ENCODE measurements at regions of chr3 and their contacts with region 1.

Region 1: DNA sequence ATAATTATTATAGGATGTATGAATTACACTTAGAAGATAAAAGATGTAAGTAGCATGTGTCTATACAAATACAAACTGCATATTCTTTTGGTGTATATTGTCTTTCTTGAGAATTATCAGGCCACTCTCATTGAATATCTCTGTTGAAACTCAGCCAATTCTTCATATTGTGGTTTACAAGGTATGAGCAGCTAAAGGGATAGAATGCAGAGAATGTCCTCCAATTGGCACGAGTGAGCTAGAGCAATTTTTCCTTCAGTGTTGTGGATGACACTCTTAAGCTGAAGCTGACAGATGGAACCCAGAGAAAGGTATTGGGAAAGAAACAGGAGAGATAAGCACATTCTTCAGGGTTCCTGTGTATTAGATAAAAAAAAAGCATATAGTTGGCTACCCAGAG is 453.1 kb downstream of the EPHA3 start:
- DNase-seq: no peak
- ATAC-seq: no peak
- H3K4me3 Mint-ChIP-seq: no peak overlapping the region
- H3K27ac Mint-ChIP-seq: no peak overlapping the region
- H3K4me1 Mint-ChIP-seq: no peaks in the 10 kb centered on the region
- H3K27me3 Mint-ChIP-seq: no peaks in the 10 kb centered on the region
- CTCF ChIP-seq: no peak

Region 2: GRCh38 chr3:88882121-88882520 is 678.4 kb before region 1 on chr3:
- CTCF ChIA-PET with region 1: no interaction called
- POLR2A ChIA-PET with region 1: no interaction called
- intact Hi-C with region 1: no loop called
- DNase-seq: no peak
- ATAC-seq: no peak
- H3K4me3 Mint-ChIP-seq: no peak overlapping the region
- H3K27ac Mint-ChIP-seq: no peak overlapping the region
- H3K4me1 Mint-ChIP-seq: no peaks in the 10 kb centered on the region
- H3K27me3 Mint-ChIP-seq: no peaks in the 10 kb centered on the region
- CTCF ChIP-seq: no peak

Region 3: GRCh38 chr3:89340408-89340807 is 220.1 kb before region 1 on chr3:
- CTCF ChIA-PET with region 1: no interaction called
- POLR2A ChIA-PET with region 1: no interaction called
- intact Hi-C with region 1: no loop called
- DNase-seq: no peak
- ATAC-seq: no peak
- H3K4me3 Mint-ChIP-seq: no peak overlapping the region
- H3K27ac Mint-ChIP-seq: no peak overlapping the region
- H3K4me1 Mint-ChIP-seq: no peaks in the 10 kb centered on the region
- H3K27me3 Mint-ChIP-seq: no peaks in the 10 kb centered on the region
- CTCF ChIP-seq: no peak

Region 4: DNA sequence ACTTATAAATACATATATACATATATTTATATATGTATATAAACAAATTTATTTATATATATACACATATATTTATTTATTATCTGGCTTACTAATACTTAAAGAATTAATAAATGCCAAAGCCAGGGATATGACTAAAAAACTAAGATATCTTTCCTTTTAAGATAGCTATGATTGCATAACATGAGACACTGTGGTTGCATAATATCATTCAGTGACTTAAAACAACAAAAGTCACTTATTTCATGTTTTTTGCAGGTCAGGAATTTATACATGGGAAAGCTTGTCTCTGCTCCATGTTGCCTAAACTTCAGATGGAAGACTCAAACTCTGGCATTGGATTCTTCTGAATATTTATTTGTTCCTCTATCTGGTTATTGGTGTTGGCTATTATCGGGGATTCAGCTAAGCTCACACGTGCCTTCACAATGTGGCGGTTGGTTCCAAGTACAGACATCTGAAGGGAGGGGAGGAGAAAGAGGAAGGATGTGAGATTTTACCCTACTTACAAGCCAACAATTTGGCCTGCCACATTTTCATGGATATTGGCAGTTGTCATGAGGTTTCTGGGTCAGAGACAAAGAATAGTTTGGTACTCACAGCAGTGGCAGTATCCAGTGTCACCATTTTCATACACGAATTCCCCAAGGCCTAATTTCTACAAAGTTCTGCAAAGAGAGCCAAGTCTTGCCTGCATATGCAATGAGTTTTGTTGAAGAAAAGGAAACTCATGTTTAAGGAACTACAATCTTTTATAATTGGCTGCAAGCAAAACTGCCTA is 71.6 kb before region 1 on chr3:
- CTCF ChIA-PET with region 1: no interaction called
- POLR2A ChIA-PET with region 1: no interaction called
- intact Hi-C with region 1: no loop called
- DNase-seq: no peak
- ATAC-seq: no peak
- H3K4me3 Mint-ChIP-seq: no peak overlapping the region
- H3K27ac Mint-ChIP-seq: no peak overlapping the region
- H3K4me1 Mint-ChIP-seq: no peaks in the 10 kb centered on the region
- H3K27me3 Mint-ChIP-seq: no peaks in the 10 kb centered on the region
- CTCF ChIP-seq: no peak

Region 5: DNA sequence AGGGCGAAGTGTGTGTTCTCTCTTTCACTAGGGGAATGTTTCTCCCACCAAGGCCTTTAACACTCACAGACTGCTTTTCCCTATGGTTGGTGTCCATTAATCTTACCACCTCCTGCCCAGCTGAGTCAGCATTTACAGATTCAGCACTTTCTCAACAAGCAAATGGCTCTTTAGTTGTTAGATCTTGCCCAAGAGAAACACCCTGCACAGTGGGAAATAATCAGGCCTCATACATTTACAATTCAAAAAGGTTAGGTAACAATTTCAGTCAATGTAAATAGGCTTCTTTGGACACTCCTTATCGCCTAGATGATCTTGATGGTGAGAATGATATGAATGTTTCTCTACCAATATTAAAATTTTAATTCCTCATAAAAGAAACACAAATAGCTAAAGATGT is 34.9 kb before region 1 on chr3:
- CTCF ChIA-PET with region 1: no interaction called
- POLR2A ChIA-PET with region 1: no interaction called
- intact Hi-C with region 1: loop called (anchors 1 kb)
- DNase-seq: no peak
- ATAC-seq: no peak
- H3K4me3 Mint-ChIP-seq: no peak overlapping the region
- H3K27ac Mint-ChIP-seq: no peak overlapping the region
- H3K4me1 Mint-ChIP-seq: no peaks in the 10 kb centered on the region
- H3K27me3 Mint-ChIP-seq: no peaks in the 10 kb centered on the region
- CTCF ChIP-seq: no peak

Measured in activated B cell treated with CpG ODN at 0.5 μM for 24 hours (primary cell).